Right ventricle myocardium inferior (tissue), 1 donor: ENCODE measurements at regions of chr14 and their contacts with region 1.

Region 1: GRCh38 chr14:34129927-34130552 is 179.2 kb upstream of the EGLN3 start:
- DNase-seq: no peak
- ATAC-seq: no peak

Region 2: GRCh38 chr14:34059855-34060638 is 70.0 kb before region 1 on chr14:
- intact Hi-C with region 1: loop called (anchors 2 kb)
- DNase-seq: peak; percentile 89
- ATAC-seq: peak; percentile 94

Region 3: GRCh38 chr14:34081576-34082136 is 48.4 kb before region 1 on chr14:
- intact Hi-C with region 1: loop called (anchors 5 kb)
- DNase-seq: no peak
- ATAC-seq: peak; percentile 66

Region 4: GRCh38 chr14:34199564-34199963 is 69.5 kb after region 1 on chr14:
- intact Hi-C with region 1: no loop called
- DNase-seq: no peak
- ATAC-seq: no peak